ENCODE measurements at regions of chr16 and their contacts with region 1.

Region 1: DNA sequence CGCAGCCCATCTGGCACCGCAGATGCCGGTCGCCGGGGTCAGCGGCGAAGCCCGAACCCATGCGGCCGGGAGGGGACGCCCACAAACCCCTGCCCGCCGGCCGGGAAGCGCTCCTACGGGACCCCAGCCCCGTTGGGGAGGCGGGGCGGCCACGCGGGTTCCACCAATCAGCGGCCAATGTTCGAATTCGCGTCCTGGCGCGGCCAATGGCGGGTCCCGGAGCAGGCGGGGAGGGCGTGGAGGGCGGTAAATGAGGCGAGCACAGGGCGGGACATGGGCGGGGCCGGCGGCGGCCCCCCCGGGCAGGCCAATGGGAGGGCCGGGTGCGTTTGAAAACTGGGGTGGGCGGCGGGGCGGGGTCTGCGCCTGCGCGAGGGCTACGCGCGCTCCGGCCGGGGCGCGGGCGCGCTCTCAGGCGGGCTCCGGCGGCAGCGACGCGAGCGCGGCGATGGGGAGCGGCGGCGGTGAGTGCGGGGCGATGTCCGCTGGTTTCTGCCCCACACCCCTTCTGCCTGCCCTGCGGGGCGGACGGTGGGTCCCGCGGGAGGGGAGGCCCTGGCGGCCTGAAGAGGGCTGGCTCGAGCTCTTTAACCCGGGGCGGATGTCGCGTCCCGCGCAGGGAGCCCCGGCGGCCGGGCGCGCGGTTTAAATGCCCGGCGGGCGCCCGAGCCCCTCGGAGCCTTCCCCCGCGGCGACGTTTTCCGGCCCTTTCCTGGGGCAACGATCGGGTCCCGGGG is at the start of gene CCNF:
- DNase-seq: peak; percentile 96
- H3K4me3 ChIP-seq: peak within 1 kb of the TSS; percentile 75 to 92 (median 85)
- H3K27ac ChIP-seq: peak within 1 kb of the TSS; percentile 38
- H3K4me1 ChIP-seq: peaks cover 21% of the 10 kb centered on the region
- H3K27me3 ChIP-seq: no peaks in the 10 kb centered on the region
- CTCF ChIP-seq: no peak
- POLR2A ChIP-seq: peak; percentile 69
- total RNA-seq, gene CCNF: 46.6 and 48.9 TPM in 2 replicates

Region 2: GRCh38 chr16:2267913-2268666 is 161.1 kb before region 1 on chr16 and contains the start of gene RNPS1:
- CTCF ChIA-PET with region 1: no interaction called
- POLR2A ChIA-PET with region 1: no interaction called
- dilution Hi-C with region 1: no loop called
- intact Hi-C with region 1: loop called (anchors 2 kb)
- DNase-seq: peak; percentile 96
- H3K4me3 ChIP-seq: peak within 1 kb of the TSS; percentile 16 to 73 (median 44)
- H3K27ac ChIP-seq: peak within 1 kb of the TSS; percentile 78
- H3K4me1 ChIP-seq: peaks cover 9% of the 10 kb centered on the region
- H3K27me3 ChIP-seq: no peaks in the 10 kb centered on the region
- CTCF ChIP-seq: no peak
- POLR2A ChIP-seq: peak; percentile 85
- total RNA-seq, gene RNPS1: 204 and 209 TPM in 2 replicates

Region 3: GRCh38 chr16:2296661-2297505 is 132.3 kb before region 1 on chr16:
- CTCF ChIA-PET with region 1: interaction called, 5 read pairs
- POLR2A ChIA-PET with region 1: no interaction called
- dilution Hi-C with region 1: no loop called
- intact Hi-C with region 1: loop called (anchors 10 kb)
- DNase-seq: peak; percentile 31
- H3K4me3 ChIP-seq: no peak overlapping the region
- H3K27ac ChIP-seq: no peak overlapping the region
- H3K4me1 ChIP-seq: no peaks in the 10 kb centered on the region
- H3K27me3 ChIP-seq: no peaks in the 10 kb centered on the region
- CTCF ChIP-seq: peak; percentile 42 to 44
- POLR2A ChIP-seq: no peak

Region 4: DNA sequence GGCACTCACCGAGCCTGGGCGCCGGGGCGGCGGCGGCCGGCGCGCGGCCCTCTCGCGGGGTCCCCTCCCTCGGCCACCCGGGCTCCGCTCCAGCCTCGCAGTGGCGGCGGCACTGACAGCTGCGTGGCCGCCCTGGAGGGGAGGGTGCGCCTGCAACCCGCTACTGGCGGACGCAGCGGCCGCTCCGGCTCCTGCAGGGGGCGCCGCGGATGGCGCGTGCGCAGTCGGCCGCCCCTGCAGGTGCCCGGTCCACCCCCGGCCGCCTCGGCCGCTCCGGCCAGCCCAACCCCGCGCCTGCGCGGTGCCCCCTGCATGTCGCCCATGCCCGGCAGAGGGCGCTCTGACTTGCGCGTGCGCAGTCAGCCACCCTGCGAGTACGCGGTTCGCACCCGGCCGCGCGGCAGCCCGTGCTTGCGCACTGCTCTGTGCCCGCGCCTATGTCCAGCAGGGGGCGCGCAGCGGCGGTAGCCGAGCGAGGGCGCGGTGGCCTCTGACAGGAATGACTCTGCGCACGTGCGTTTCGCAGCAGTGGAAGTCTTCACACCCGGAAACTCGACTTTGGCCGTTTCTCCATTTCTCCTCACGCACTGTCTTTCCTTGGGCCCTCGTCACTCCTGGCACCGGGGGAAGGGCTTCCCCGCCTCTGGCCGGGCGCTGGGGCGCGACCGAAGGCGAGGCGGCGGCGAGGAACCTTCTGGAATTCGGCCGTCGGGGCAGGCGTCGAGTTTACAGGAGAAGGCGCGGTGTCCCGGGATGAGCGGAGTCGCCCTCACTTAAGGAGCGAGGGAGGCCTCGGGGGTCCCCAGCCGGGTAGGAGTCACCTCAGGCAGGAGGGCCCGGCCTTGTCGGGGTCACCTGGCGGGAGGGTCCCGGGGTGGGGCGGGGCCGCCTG is 88.4 kb before region 1 on chr16 and contains the start of gene ABCA3:
- CTCF ChIA-PET with region 1: interaction called, 14 read pairs
- POLR2A ChIA-PET with region 1: no interaction called
- dilution Hi-C with region 1: no loop called
- intact Hi-C with region 1: loop called (anchors 2 kb)
- DNase-seq: peak; percentile 98
- H3K4me3 ChIP-seq: peak within 1 kb of the TSS; percentile 57 to 79 (median 60)
- H3K27ac ChIP-seq: peak within 1 kb of the TSS; percentile 29
- H3K4me1 ChIP-seq: peaks cover 9% of the 10 kb centered on the region
- H3K27me3 ChIP-seq: peaks cover 7 to 28% of the 10 kb centered on the region in 2 experiments
- CTCF ChIP-seq: peak; percentile 98 to 100
- POLR2A ChIP-seq: peak; percentile 70
- total RNA-seq, gene ABCA3: 25.5 and 36.0 TPM in 2 replicates

Region 5: GRCh38 chr16:2459647-2460390 is 30.6 kb after region 1 on chr16 and contains the start of gene TEDC2:
- CTCF ChIA-PET with region 1: interaction called, 4 read pairs
- POLR2A ChIA-PET with region 1: interaction called, 6 read pairs
- dilution Hi-C with region 1: no loop called
- intact Hi-C with region 1: loop called (anchors 1 kb)
- DNase-seq: peak; percentile 97
- H3K4me3 ChIP-seq: peak within 1 kb of the TSS; percentile 48 to 57 (median 50)
- H3K27ac ChIP-seq: no peak within 1 kb of the TSS
- H3K4me1 ChIP-seq: peaks cover 10% of the 10 kb centered on the region
- H3K27me3 ChIP-seq: no peaks in the 10 kb centered on the region
- CTCF ChIP-seq: no peak
- POLR2A ChIP-seq: no peak
- total RNA-seq, gene TEDC2: 12.7 and 15.2 TPM in 2 replicates

Region 6: DNA sequence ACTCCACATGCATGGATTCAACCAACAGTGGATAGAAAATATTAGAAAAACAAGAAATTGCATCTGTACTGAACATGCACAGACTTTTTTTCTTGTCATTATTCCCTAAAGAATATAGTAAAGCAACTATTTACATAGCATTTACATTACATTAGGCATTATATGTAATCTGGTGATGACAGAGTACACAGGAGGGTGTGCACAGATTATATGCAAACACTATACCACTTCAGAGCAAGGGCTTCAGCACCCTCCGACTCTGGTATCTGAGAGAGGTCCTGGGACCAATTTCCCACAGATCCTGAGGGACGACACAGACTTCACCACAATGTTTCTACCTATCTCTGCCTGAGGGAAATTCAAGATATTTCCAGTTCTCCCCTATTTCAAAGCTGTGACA is 227.8 kb after region 1 on chr16:
- CTCF ChIA-PET with region 1: no interaction called
- POLR2A ChIA-PET with region 1: no interaction called
- dilution Hi-C with region 1: no loop called
- intact Hi-C with region 1: no loop called
- DNase-seq: no peak
- H3K4me3 ChIP-seq: no peak overlapping the region
- H3K27ac ChIP-seq: no peak overlapping the region
- H3K4me1 ChIP-seq: no peaks in the 10 kb centered on the region
- H3K27me3 ChIP-seq: peaks cover 6 to 7% of the 10 kb centered on the region in 2 experiments
- CTCF ChIP-seq: no peak
- POLR2A ChIP-seq: no peak

Measured in endothelial cell of umbilical vein (primary cell).